IMR-90 (cell line): ENCODE measurements at regions of chr16 and their contacts with region 1.

Region 1: DNA sequence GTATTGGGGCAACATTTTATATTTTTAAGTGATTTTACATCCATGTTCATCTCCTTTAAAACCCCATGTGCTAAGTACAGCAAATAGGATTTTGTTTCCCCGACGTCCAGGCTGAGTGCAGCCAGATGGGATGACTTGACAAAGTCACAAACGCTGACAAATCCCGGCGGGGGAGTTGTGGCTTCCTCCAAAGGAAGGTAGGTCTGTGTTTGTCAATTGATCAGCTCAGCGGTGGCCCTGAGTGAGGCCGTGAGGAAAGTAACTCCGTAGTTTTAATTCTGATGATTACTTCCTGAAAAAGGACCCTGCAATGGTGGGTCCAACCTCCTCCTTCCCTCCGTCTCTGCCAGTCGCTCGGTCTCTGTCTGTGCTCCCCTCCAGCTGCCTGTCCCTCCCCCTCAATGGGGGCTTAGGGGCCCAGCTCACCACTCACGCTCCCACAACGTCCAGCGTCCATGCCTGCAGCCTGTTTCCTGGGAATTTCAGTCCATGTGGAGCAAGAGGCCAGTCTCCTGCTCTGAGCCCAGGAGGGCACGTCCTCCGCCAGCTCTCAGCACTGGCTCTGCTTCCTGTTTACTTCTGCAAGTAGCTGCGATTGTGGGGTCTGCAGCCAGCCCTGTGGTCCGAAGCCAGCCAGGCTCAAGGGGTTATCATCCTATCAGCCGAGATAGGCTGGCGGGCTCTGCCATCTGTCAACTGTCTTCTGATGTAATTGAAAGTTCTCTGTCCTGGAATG is 209.4 kb upstream of the FOXF1 start:
- DNase-seq: peak; percentile 85
- ATAC-seq: peak; percentile 16
- H3K4me3 ChIP-seq: peak overlapping the region; percentile 21
- H3K27ac ChIP-seq: peak overlapping the region; percentile 97
- H3K4me1 ChIP-seq: peaks cover 65% of the 10 kb centered on the region
- H3K27me3 ChIP-seq: no peaks in the 10 kb centered on the region
- CTCF ChIP-seq: no peak
- POLR2A ChIP-seq: peak; percentile 49; the same call in 1 of the 2 replicates
- RAD21 ChIP-seq: no peak

Region 2: DNA sequence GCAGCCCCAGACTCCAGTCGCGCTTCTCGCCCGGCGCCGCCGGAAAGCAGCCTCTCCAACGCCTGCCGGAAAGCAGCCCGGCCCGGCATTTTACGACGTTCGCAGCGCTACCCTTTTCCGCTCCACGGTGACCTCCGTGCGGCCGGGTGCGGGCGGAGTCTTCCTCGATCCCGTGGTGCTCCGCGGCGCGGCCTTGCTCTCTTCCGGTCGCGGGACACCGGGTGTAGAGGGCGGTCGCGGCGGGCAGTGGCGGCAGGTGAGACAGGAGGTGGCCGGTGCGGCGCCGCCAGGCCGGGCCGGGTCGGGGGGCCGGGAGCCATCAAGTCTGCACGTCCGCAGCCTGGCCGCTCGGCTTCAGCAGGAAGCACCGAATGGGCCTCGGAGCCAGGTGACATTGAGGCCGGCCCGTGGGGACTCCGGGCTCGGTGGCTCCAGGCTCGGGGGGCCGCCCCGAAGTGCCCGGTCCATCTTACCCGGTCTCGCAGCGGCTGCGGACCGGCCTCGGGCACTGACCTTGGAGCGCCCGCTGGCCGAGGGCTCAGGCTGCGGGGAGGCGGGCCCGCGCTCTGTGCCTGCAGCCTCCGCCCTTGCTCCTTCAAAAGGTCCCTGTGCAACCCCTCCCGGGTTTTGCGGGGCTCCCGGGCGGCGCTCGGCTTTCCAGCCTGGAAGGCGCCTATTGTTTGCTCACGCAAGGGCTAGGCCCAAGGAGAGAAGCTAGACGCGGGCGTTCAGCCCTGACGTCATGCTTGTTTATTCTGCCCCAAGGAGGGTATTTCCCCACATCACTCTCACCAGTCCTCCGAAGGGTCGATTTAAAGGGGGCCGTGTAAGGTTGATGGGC is 501.2 kb before region 1 on chr16 and contains the starts of genes COX4I1 and EMC8:
- CTCF ChIA-PET with region 1: no interaction called
- POLR2A ChIA-PET with region 1: no interaction called
- dilution Hi-C with region 1: no loop called
- in situ Hi-C with region 1: loop called (anchors 25 kb)
- intact Hi-C with region 1: no loop called
- DNase-seq: peak; percentile 92
- ATAC-seq: peak; percentile 93
- H3K4me3 ChIP-seq: peak within 1 kb of the TSS; percentile 94
- H3K27ac ChIP-seq: peak within 1 kb of the TSS; percentile 74
- H3K4me1 ChIP-seq: peaks cover 2% of the 10 kb centered on the region; the same call in 1 of the 2 replicates
- H3K27me3 ChIP-seq: no peaks in the 10 kb centered on the region
- CTCF ChIP-seq: no peak
- POLR2A ChIP-seq: peak; percentile 83
- RAD21 ChIP-seq: no peak
- total RNA-seq, gene COX4I1: 392 and 397 TPM in 2 replicates
- total RNA-seq, gene EMC8: 23.7 and 28.3 TPM in 2 replicates

Region 3: GRCh38 chr16:86252596-86252995 is 48.3 kb before region 1 on chr16:
- CTCF ChIA-PET with region 1: interaction called, 11 read pairs
- POLR2A ChIA-PET with region 1: interaction called, 3 read pairs
- dilution Hi-C with region 1: no loop called
- in situ Hi-C with region 1: no loop called
- intact Hi-C with region 1: no loop called
- DNase-seq: peak; percentile 65
- ATAC-seq: peak; percentile 56
- H3K4me3 ChIP-seq: no peak overlapping the region
- H3K27ac ChIP-seq: peak overlapping the region; percentile 94
- H3K4me1 ChIP-seq: peaks cover 21% of the 10 kb centered on the region
- H3K27me3 ChIP-seq: no peaks in the 10 kb centered on the region
- CTCF ChIP-seq: peak; percentile 47
- POLR2A ChIP-seq: no peak
- RAD21 ChIP-seq: peak; percentile 37

Region 4: DNA sequence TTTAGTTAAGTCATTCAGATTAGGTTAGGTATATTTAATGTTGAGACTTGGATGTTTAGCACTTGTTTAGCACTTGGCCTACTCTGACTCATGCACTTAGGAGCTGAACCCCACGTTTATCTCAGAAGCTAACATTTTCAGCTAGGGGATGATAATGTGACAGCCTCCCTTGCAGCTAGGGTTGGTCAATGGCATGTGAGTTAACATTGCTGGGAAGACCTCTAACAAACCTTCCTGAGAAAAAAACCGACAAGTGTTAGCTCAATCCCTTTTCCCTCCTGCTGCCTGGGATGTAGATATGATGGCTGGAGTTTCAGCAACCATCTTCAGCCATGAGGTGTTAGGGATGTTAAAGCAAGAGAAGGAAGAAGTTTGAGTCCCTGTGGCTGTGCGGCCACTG is 24.4 kb after region 1 on chr16:
- CTCF ChIA-PET with region 1: no interaction called
- POLR2A ChIA-PET with region 1: interaction called, 19 read pairs
- dilution Hi-C with region 1: no loop called
- in situ Hi-C with region 1: no loop called
- intact Hi-C with region 1: no loop called
- DNase-seq: no peak
- ATAC-seq: no peak
- H3K4me3 ChIP-seq: no peak overlapping the region
- H3K27ac ChIP-seq: no peak overlapping the region
- H3K4me1 ChIP-seq: peaks cover 3% of the 10 kb centered on the region; the same call in 1 of the 2 replicates
- H3K27me3 ChIP-seq: peaks cover 7% of the 10 kb centered on the region; the same call in 1 of the 2 replicates
- CTCF ChIP-seq: no peak
- POLR2A ChIP-seq: no peak
- RAD21 ChIP-seq: no peak

Region 5: GRCh38 chr16:86387461-86388440 is 86.8 kb after region 1 on chr16:
- CTCF ChIA-PET with region 1: no interaction called
- POLR2A ChIA-PET with region 1: interaction called, 5 read pairs
- dilution Hi-C with region 1: no loop called
- in situ Hi-C with region 1: loop called (anchors 5 kb)
- intact Hi-C with region 1: no loop called
- DNase-seq: peak; percentile 100
- ATAC-seq: peak; percentile 68
- H3K4me3 ChIP-seq: no peak overlapping the region
- H3K27ac ChIP-seq: peak overlapping the region; percentile 85
- H3K4me1 ChIP-seq: peaks cover 37% of the 10 kb centered on the region
- H3K27me3 ChIP-seq: no peaks in the 10 kb centered on the region
- CTCF ChIP-seq: no peak
- POLR2A ChIP-seq: no peak
- RAD21 ChIP-seq: peak; percentile 38

Region 6: GRCh38 chr16:86457501-86458148 is 156.7 kb after region 1 on chr16:
- CTCF ChIA-PET with region 1: no interaction called
- POLR2A ChIA-PET with region 1: no interaction called
- dilution Hi-C with region 1: no loop called
- in situ Hi-C with region 1: no loop called
- intact Hi-C with region 1: loop called (anchors 5 kb)
- DNase-seq: peak; percentile 99
- ATAC-seq: peak; percentile 61
- H3K4me3 ChIP-seq: no peak overlapping the region
- H3K27ac ChIP-seq: peak overlapping the region; percentile 97
- H3K4me1 ChIP-seq: peaks cover 28% of the 10 kb centered on the region
- H3K27me3 ChIP-seq: no peaks in the 10 kb centered on the region
- CTCF ChIP-seq: no peak
- POLR2A ChIP-seq: peak; percentile 72
- RAD21 ChIP-seq: no peak; the same call in 1 of the 2 replicates